Uterus (tissue), 4 donors: ENCODE measurements at regions of chr1 and their contacts with region 1.

Region 1: GRCh38 chr1:115112496-115113375 is 23.4 kb upstream of the TSPAN2 start:
- DNase-seq: peak; percentile 38 to 52
- H3K4me3 ChIP-seq: no peak overlapping the region
- H3K27ac ChIP-seq: no peak overlapping the region
- H3K4me1 ChIP-seq: no peaks in the 10 kb centered on the region
- H3K27me3 ChIP-seq: no peaks in the 10 kb centered on the region
- CTCF ChIP-seq: peak; percentile 89 to 93 (median 90)
- POLR2A ChIP-seq: no peak

Region 2: DNA sequence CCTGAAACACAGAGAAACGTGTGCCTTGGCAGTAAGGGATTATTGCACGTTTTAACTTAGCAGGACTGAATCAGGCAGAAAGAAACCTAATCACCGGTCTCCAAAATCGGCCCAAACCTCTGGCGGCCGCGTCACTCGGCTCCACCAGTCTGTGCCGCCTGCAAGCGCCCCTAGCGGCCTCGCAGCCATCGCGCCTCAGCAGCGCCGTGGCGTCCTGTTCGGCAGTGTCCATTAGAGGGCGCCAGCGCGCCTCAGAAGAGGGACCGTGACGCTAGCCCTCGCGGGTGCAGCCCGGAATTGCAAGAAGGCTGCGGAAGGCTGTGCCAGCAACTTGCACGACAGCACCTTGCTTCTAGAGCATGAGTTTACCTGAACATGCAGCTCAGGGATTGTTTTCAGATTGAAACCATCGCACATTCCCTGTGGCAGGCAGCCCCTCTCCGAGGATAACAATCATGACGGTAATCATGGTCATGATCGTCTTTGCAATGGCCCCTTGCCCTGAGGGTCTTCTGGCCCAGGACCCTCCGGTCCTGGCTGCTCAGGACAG is 766.2 kb before region 1 on chr1:
- intact Hi-C with region 1: no loop called
- DNase-seq: peak; percentile 94 to 98
- H3K4me3 ChIP-seq: peak overlapping the region; percentile 28 to 37
- H3K27ac ChIP-seq: peak overlapping the region; percentile 90 to 97
- H3K4me1 ChIP-seq: no peaks in the 10 kb centered on the region
- H3K27me3 ChIP-seq: no peaks in the 10 kb centered on the region
- CTCF ChIP-seq: peak; percentile 100
- POLR2A ChIP-seq: peak; percentile 16 to 48

Region 3: DNA sequence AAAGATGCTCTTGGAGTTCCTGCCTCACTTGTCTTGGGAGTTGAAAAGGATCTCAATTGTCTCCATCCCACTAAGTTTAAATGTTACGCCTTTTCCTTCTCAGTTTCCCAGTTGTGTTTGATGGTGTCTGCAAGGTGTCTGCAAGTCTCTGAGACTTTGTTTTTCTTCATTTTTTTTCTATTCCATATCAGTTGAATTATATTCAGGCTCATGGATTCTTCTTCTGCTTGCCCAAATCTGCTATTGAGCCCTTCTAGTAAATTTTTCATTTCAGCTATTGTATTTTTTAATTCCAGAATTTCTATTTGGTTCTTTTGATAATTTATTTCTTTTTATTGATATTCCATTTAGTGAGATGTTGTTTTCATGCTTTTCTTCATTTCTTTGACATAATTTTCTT is 130.5 kb before region 1 on chr1:
- intact Hi-C with region 1: loop called (anchors 5 kb)
- DNase-seq: no peak
- H3K4me3 ChIP-seq: no peak overlapping the region
- H3K27ac ChIP-seq: no peak overlapping the region
- H3K4me1 ChIP-seq: no peaks in the 10 kb centered on the region
- H3K27me3 ChIP-seq: peaks cover 0 to 8% of the 10 kb centered on the region in 2 donors
- CTCF ChIP-seq: no peak
- POLR2A ChIP-seq: no peak